ENCODE measurements at regions of chr1 and their contacts with region 1.

Region 1: GRCh38 chr1:30379684-30380624 is 343.4 kb downstream of the MATN1 start:
- DNase-seq: peak; percentile 60
- ATAC-seq: peak; percentile 95
- H3K4me3 ChIP-seq: peak overlapping the region in 1 of 2 experiments; percentile 22; a peak in 2 of 4 replicates
- H3K27ac ChIP-seq: no peak overlapping the region; the same call in 1 of the 2 replicates
- H3K4me1 ChIP-seq: peaks cover 0 to 11% of the 10 kb centered on the region in 2 experiments; a peak in 3 of 4 replicates
- H3K27me3 ChIP-seq: 0 out of 2 replicates have a peak, but pooled peaks cover 3% of the 10 kb centered on the region
- CTCF ChIP-seq: peak; percentile 73 to 86 (median 82)
- POLR2A ChIP-seq: no peak
- RAD21 ChIP-seq: peak; percentile 78

Region 2: GRCh38 chr1:29379443-29380073 is 1000.4 kb before region 1 on chr1:
- CTCF ChIA-PET with region 1: no interaction called
- POLR2A ChIA-PET with region 1: no interaction called
- RAD21 ChIA-PET with region 1: no interaction called
- intact Hi-C with region 1: loop called (anchors 5 kb)
- DNase-seq: peak; percentile 72
- ATAC-seq: peak; percentile 67
- H3K4me3 ChIP-seq: no peak overlapping the region
- H3K27ac ChIP-seq: no peak overlapping the region
- H3K4me1 ChIP-seq: peaks cover 0 to 5% of the 10 kb centered on the region in 2 experiments; a peak in 1 of 4 replicates
- H3K27me3 ChIP-seq: no peaks in the 10 kb centered on the region
- CTCF ChIP-seq: peak; percentile 87 to 99 (median 93)
- POLR2A ChIP-seq: no peak
- RAD21 ChIP-seq: peak; percentile 96

Region 3: GRCh38 chr1:30363031-30363430 is 16.9 kb before region 1 on chr1:
- CTCF ChIA-PET with region 1: interaction called, 27 read pairs
- POLR2A ChIA-PET with region 1: no interaction called
- RAD21 ChIA-PET with region 1: no interaction called
- intact Hi-C with region 1: no loop called
- DNase-seq: no peak
- ATAC-seq: no peak
- H3K4me3 ChIP-seq: no peak overlapping the region
- H3K27ac ChIP-seq: no peak overlapping the region
- H3K4me1 ChIP-seq: peaks cover 0 to 9% of the 10 kb centered on the region in 2 experiments; a peak in 2 of 4 replicates
- H3K27me3 ChIP-seq: 0 out of 2 replicates have a peak, but pooled peaks cover 3% of the 10 kb centered on the region
- CTCF ChIP-seq: no peak
- POLR2A ChIP-seq: no peak
- RAD21 ChIP-seq: no peak

Region 4: DNA sequence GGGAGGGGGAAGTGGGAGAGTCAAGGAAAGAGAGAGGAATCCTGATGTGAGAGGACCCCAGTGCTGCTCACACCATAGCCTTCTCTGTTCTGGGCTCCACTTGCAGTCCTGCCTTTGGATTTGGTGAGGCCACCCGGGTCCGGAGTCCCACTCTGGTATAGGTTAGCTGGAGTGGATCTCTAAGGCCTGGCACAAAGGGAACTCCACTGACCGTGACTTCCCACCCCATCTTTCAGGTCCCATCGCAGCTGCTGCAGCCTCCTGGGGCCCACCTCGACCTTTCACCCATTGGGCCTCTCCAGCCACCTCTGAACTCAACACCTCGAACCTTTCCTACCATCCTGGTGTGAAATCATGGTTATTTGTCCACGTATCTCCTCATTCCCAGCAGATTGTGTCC is 19.1 kb after region 1 on chr1:
- CTCF ChIA-PET with region 1: interaction called, 10 read pairs
- POLR2A ChIA-PET with region 1: interaction called, 3 read pairs
- RAD21 ChIA-PET with region 1: no interaction called
- intact Hi-C with region 1: no loop called
- DNase-seq: no peak
- ATAC-seq: no peak
- H3K4me3 ChIP-seq: no peak overlapping the region
- H3K27ac ChIP-seq: no peak overlapping the region
- H3K4me1 ChIP-seq: no peaks in the 10 kb centered on the region
- H3K27me3 ChIP-seq: peaks cover 2% of the 10 kb centered on the region
- CTCF ChIP-seq: no peak
- POLR2A ChIP-seq: no peak
- RAD21 ChIP-seq: no peak

Region 5: GRCh38 chr1:30684881-30685795 is 305.2 kb after region 1 on chr1:
- CTCF ChIA-PET with region 1: interaction called, 17 read pairs
- POLR2A ChIA-PET with region 1: no interaction called
- RAD21 ChIA-PET with region 1: interaction called in 1 of 2 experiments, 3 read pairs
- intact Hi-C with region 1: no loop called
- DNase-seq: peak; percentile 90
- ATAC-seq: peak; percentile 98
- H3K4me3 ChIP-seq: peak overlapping the region; percentile 43 to 55
- H3K27ac ChIP-seq: peak overlapping the region; percentile 52; the same call in 1 of the 2 replicates
- H3K4me1 ChIP-seq: peaks cover 10 to 21% of the 10 kb centered on the region in 2 experiments; a peak in 3 of 4 replicates
- H3K27me3 ChIP-seq: no peaks in the 10 kb centered on the region
- CTCF ChIP-seq: peak; percentile 24 to 71 (median 26); a peak in 3 of 6 replicates
- POLR2A ChIP-seq: no peak
- RAD21 ChIP-seq: peak; percentile 70

Measured in HCT116 (cell line).